CD8-positive, alpha-beta T cell (primary cell): ENCODE measurements at regions of chr1 and their contacts with region 1.

Region 1: GRCh38 chr1:109773146-109773899 is 9.6 kb upstream of the EPS8L3 start:
- DNase-seq: peak; percentile 29 to 83 (median 67)
- ATAC-seq: peak; percentile 90
- H3K4me3 ChIP-seq: no peak overlapping the region
- H3K4me3 Mint-ChIP-seq: no peak overlapping the region
- H3K27ac ChIP-seq: no peak overlapping the region
- H3K27ac Mint-ChIP-seq: no peak overlapping the region
- H3K4me1 ChIP-seq: peaks cover 3% of the 10 kb centered on the region
- H3K4me1 Mint-ChIP-seq: peaks cover 8% of the 10 kb centered on the region
- H3K27me3 ChIP-seq: peaks cover 0 to 2% of the 10 kb centered on the region in 2 experiments
- H3K27me3 Mint-ChIP-seq: peaks cover 3% of the 10 kb centered on the region
- CTCF ChIP-seq: peak; percentile 65

Region 2: GRCh38 chr1:109454497-109455133 is 318.7 kb before region 1 on chr1:
- CTCF ChIA-PET with region 1: no interaction called
- POLR2A ChIA-PET with region 1: no interaction called
- intact Hi-C with region 1: no loop called
- DNase-seq: no peak
- ATAC-seq: no peak
- H3K4me3 ChIP-seq: no peak overlapping the region
- H3K4me3 Mint-ChIP-seq: no peak overlapping the region
- H3K27ac ChIP-seq: no peak overlapping the region
- H3K27ac Mint-ChIP-seq: no peak overlapping the region
- H3K4me1 ChIP-seq: no peaks in the 10 kb centered on the region
- H3K4me1 Mint-ChIP-seq: no peaks in the 10 kb centered on the region
- H3K27me3 ChIP-seq: peaks cover 0 to 4% of the 10 kb centered on the region in 2 experiments
- H3K27me3 Mint-ChIP-seq: peaks cover 29% of the 10 kb centered on the region
- CTCF ChIP-seq: no peak

Region 3: GRCh38 chr1:109649491-109649914 is 123.8 kb before region 1 on chr1:
- CTCF ChIA-PET with region 1: interaction called, 316 read pairs
- POLR2A ChIA-PET with region 1: no interaction called
- intact Hi-C with region 1: no loop called
- DNase-seq: no peak
- ATAC-seq: no peak
- H3K4me3 ChIP-seq: no peak overlapping the region
- H3K4me3 Mint-ChIP-seq: no peak overlapping the region
- H3K27ac ChIP-seq: no peak overlapping the region
- H3K27ac Mint-ChIP-seq: no peak overlapping the region
- H3K4me1 ChIP-seq: no peaks in the 10 kb centered on the region
- H3K4me1 Mint-ChIP-seq: no peaks in the 10 kb centered on the region
- H3K27me3 ChIP-seq: no peaks in the 10 kb centered on the region
- H3K27me3 Mint-ChIP-seq: peaks cover 2% of the 10 kb centered on the region
- CTCF ChIP-seq: no peak

Region 4: DNA sequence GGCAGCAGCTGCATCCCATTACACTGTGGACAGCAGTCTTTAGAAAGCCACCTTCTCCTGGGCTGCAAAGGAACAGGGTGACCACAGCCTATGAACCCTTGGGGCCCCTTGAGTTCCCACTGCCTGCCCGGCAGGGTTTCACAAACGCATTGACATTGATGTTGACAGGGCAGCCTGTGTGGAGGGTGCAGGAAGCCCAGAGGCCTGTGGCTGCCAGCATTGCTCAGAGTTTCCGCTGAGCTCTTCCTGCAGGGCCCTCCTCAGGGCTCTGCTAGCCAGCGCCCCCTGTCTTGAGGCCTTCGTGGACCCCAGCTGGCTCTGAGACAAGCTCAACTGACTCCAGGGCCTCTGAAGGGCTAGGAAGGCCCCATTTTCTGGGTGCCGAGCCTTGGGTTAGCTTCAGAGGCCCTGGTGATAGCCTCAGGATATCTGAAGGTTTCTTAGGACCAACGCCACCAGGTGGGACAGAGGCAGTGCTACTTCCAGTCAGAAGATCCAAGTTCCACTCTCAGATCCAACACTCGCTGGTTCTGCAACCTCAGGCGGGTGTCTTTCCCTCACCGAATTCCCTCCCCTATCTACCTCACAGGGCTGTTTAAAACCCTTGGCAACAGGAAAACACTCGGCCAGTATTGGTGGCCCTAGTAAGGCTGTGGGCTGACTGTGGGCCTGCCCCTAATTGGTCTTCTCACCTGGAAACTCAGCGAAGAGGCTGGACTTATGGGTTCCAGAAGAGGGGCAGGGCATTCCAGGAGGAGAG is 17.6 kb after region 1 on chr1:
- CTCF ChIA-PET with region 1: interaction called, 205 read pairs
- POLR2A ChIA-PET with region 1: interaction called, 9 read pairs
- intact Hi-C with region 1: loop called in 1 of 2 experiments (anchors 1 kb)
- DNase-seq: peak; percentile 55 to 90 (median 84)
- ATAC-seq: peak; percentile 94
- H3K4me3 ChIP-seq: no peak overlapping the region
- H3K4me3 Mint-ChIP-seq: no peak overlapping the region
- H3K27ac ChIP-seq: peak overlapping the region; percentile 14 to 74
- H3K27ac Mint-ChIP-seq: peak overlapping the region; percentile 85
- H3K4me1 ChIP-seq: peaks cover 59% of the 10 kb centered on the region
- H3K4me1 Mint-ChIP-seq: peaks cover 70% of the 10 kb centered on the region
- H3K27me3 ChIP-seq: no peaks in the 10 kb centered on the region
- H3K27me3 Mint-ChIP-seq: no peaks in the 10 kb centered on the region
- CTCF ChIP-seq: peak; percentile 54

Region 5: DNA sequence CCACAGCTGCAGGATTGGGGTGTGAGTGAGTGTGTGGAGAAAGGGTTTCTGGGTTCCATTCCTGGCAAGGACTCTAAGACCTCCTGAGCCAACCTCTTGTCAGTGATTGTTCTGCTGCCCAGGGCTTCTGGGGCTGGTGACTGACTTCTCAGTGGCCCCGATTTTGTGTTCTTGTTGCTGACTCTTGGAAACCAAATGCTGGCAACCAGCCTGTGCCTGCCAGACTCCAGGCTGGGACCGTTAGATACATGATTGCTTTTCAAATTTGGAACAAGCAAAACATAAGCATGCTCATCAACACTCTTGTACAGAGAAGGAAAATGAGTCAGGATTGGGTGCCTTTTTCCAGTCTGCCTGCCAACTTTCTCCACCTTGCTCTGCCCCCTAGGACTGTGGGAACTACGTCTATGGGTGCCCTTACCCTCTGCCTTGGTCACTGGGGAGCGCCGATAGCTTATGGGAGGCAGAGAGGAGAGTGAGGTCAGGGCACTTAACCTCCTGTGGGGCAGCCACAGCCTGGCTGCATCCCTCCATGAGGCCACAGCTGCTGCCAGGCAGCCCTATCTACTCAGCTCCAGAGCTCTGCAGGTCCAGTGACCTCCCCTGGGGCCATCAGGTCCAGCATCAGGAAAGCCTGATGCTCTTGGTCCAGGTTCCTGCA is 29.7 kb after region 1 on chr1:
- CTCF ChIA-PET with region 1: interaction called, 35 read pairs
- POLR2A ChIA-PET with region 1: interaction called, 3 read pairs
- intact Hi-C with region 1: no loop called
- DNase-seq: no peak
- ATAC-seq: no peak
- H3K4me3 ChIP-seq: peak overlapping the region; percentile 10 to 28
- H3K4me3 Mint-ChIP-seq: peak overlapping the region; percentile 73
- H3K27ac ChIP-seq: peak overlapping the region; percentile 1 to 55
- H3K27ac Mint-ChIP-seq: peak overlapping the region; percentile 85
- H3K4me1 ChIP-seq: peaks cover 62% of the 10 kb centered on the region
- H3K4me1 Mint-ChIP-seq: peaks cover 61% of the 10 kb centered on the region
- H3K27me3 ChIP-seq: no peaks in the 10 kb centered on the region
- H3K27me3 Mint-ChIP-seq: no peaks in the 10 kb centered on the region
- CTCF ChIP-seq: no peak

Region 6: DNA sequence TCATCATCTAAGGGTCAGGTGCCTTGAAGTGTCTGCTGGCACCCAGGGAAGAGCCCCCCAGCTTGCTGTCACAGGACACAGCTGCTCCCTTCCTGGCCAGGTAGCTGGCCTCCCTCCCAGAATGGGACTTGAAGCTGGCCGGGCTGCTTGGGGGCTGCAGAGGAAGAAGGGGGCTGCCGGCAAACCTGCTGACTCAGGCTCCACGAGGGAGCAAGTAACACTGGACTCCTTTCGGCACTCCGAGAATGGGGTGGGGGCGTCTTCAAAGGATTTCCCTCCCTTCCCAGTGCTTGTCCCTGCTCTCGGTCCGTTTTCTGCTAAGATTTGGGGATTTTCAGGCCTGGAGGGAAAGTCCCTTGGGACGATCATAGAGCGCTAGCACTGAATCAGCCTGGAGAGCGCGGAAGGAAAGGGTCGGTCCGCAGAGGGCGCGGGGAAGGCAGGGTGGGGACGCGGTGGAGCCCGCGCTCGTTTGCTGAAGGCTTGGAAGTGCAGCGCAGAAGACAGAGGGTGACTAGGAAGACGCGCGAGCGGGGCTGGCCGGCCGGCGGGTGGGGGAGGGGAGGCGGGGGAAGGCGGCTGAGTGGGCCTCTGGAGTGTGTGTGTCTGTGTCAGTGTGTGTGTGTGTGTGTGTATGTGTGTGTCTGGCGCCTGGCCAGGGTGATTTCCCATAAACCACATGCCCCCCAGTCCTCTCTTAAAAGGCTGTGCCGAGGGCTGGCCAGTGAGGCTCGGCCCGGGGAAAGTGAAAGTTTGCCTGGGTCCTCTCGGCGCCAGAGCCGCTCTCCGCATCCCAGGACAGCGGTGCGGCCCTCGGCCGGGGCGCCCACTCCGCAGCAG is 137.0 kb after region 1 on chr1 and contains the start of gene CSF1:
- CTCF ChIA-PET with region 1: interaction called, 5 read pairs
- POLR2A ChIA-PET with region 1: no interaction called
- intact Hi-C with region 1: loop called in 1 of 2 experiments (anchors 2 kb)
- DNase-seq: peak; percentile 24 to 84 (median 55)
- ATAC-seq: peak; percentile 50
- H3K4me3 ChIP-seq: peak within 1 kb of the TSS; percentile 53 to 66
- H3K4me3 Mint-ChIP-seq: peak within 1 kb of the TSS; percentile 88
- H3K27ac ChIP-seq: peak within 1 kb of the TSS in 1 of 2 experiments; percentile 29
- H3K27ac Mint-ChIP-seq: peak within 1 kb of the TSS; percentile 83
- H3K4me1 ChIP-seq: peaks cover 32% of the 10 kb centered on the region
- H3K4me1 Mint-ChIP-seq: peaks cover 61% of the 10 kb centered on the region
- H3K27me3 ChIP-seq: no peaks in the 10 kb centered on the region
- H3K27me3 Mint-ChIP-seq: no peaks in the 10 kb centered on the region
- CTCF ChIP-seq: no peak
- total RNA-seq, gene CSF1: 5.6 to 5.8 TPM

Region 7: DNA sequence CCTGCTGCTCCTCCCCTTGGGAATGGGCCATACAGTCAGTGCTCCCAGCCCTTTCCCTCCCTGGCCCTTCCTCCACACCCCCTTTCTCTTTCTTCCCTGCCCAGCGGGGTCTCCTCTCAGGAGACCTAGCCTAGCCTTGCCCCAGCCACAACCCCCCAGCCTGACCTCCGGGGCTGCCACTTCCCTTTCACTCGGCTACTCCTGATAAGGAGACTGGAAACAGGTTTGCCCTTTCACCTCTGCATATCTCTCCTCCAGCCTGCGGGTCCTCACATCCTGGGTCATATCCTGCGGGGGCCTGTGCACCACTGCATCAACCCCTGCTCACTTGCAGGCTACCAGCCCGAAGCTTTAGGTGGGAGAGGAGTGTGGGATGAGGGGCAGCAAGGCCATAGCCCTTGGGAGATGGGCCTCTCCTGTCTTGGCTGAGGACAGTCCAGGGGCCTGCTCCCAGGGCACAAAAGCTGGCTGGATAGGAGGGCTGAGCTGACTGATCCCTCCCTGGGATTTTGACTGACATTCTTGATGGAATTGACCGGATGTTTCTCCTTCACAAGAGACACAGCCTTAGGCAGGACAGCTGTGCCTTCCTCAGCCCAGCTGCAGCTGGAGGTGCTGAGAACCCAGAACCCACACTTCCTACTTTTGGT is 316.4 kb after region 1 on chr1:
- CTCF ChIA-PET with region 1: no interaction called
- POLR2A ChIA-PET with region 1: no interaction called
- intact Hi-C with region 1: no loop called
- DNase-seq: no peak
- ATAC-seq: no peak
- H3K4me3 ChIP-seq: no peak overlapping the region
- H3K4me3 Mint-ChIP-seq: no peak overlapping the region
- H3K27ac ChIP-seq: no peak overlapping the region
- H3K27ac Mint-ChIP-seq: no peak overlapping the region
- H3K4me1 ChIP-seq: no peaks in the 10 kb centered on the region
- H3K4me1 Mint-ChIP-seq: peaks cover 3% of the 10 kb centered on the region
- H3K27me3 ChIP-seq: peaks cover 3 to 4% of the 10 kb centered on the region in 2 experiments
- H3K27me3 Mint-ChIP-seq: peaks cover 32% of the 10 kb centered on the region
- CTCF ChIP-seq: no peak